HEK293T (cell line): ENCODE measurements at regions of chrX and their contacts with region 1.

Region 1: GRCh38 chrX:104136241-104137019 is 20.4 kb downstream of the SLC25A53 start:
- DNase-seq: peak; percentile 91

Region 2: DNA sequence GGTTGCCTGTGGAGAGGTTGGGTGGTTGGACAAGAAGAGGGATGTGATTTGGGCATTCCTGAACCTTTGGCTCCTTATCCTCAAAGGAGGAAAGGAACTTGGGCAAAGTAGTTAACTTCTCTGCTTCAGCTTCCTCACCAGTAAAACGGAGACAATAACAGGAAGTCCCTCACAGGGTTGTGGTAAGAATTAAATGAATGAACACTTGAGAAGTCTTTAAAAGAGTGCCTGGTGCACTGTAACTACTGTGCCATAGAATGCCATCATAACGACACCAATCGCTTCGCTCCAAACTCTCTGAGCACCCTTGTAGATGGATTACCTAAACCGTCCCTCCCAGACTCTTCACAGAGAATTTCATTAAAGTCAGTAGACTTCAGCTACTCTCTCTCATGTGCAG is 13.6 kb before region 1 on chrX:
- CTCF ChIA-PET with region 1: interaction called, 18 read pairs
- POLR2A ChIA-PET with region 1: no interaction called
- DNase-seq: no peak

Region 3: GRCh38 chrX:104400387-104400786 is 264.0 kb after region 1 on chrX:
- CTCF ChIA-PET with region 1: no interaction called
- POLR2A ChIA-PET with region 1: no interaction called
- DNase-seq: no peak